ENCODE measurements at regions of chr1 and their contacts with region 1.

Region 1: GRCh38 chr1:246450611-246451251 is 56.3 kb downstream of the SMYD3 start:
- DNase-seq: peak; percentile 5
- ATAC-seq: no peak; the same call in 1 of the 3 replicates
- H3K4me3 ChIP-seq: no peak overlapping the region
- H3K27ac ChIP-seq: no peak overlapping the region
- H3K4me1 ChIP-seq: no peaks in the 10 kb centered on the region
- H3K27me3 ChIP-seq: no peaks in the 10 kb centered on the region
- CTCF ChIP-seq: peak; percentile 65
- EP300 ChIP-seq: no peak
- POLR2A ChIP-seq: no peak
- RAD21 ChIP-seq: no peak; the same call in 1 of the 2 replicates

Region 2: DNA sequence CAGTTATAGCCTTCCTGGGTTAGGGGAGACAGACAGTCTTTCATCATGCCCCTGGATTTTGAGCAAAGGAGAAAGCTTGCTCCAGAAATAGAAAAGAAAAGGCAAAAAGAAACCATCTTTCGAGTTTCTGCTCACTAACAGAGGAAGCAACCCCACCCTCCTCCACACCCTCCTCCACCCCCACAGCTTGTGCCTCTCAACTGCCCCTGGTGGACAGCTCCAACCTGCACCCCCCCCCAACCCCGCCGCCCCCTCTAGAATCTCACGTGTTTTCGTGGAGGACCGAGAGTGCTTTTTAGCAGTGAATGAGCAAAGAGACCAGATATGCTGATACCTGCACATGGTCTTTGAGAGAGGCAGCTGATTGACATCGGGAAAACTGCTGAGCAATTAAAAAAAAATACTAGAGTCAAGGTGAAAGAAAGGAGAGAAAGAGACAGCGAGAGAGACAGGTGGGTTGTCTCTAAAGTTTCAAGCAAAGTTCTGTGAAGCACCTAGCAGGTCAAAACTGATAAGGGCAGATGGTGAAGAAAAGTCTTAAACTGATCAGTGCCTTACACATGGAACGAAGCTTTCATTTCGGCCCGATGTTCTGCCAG is 937.7 kb before region 1 on chr1:
- CTCF ChIA-PET with region 1: no interaction called
- POLR2A ChIA-PET with region 1: no interaction called
- in situ Hi-C with region 1: no loop called
- intact Hi-C with region 1: loop called (anchors 10 kb)
- DNase-seq: no peak
- ATAC-seq: peak; percentile 71
- H3K4me3 ChIP-seq: no peak overlapping the region
- H3K27ac ChIP-seq: no peak overlapping the region
- H3K4me1 ChIP-seq: no peaks in the 10 kb centered on the region
- H3K27me3 ChIP-seq: peaks cover 0 to 9% of the 10 kb centered on the region in 2 experiments; a peak in 2 of 5 replicates
- CTCF ChIP-seq: no peak
- EP300 ChIP-seq: no peak
- POLR2A ChIP-seq: no peak
- RAD21 ChIP-seq: no peak

Region 3: DNA sequence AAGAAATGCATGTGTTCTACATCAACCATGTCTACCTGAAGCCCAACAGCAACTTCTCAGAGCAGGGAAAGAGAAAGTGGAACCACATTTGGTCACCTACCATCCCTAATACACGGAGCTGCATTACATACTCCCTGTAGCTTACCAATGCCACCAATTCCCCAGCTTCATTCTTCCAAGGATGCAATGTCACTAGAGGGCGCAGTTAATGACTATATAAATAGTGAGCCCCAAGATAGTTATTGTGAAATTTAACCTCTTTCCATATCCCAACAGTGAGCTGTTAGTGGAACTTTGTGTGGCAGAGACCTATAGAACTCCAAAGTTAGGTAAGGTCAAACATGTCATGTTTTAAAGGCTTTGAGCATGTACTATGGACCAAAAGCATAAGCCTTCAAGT is 561.9 kb before region 1 on chr1:
- CTCF ChIA-PET with region 1: interaction called, 4 read pairs
- POLR2A ChIA-PET with region 1: no interaction called
- in situ Hi-C with region 1: no loop called
- intact Hi-C with region 1: loop called (anchors 5 kb)
- DNase-seq: peak; percentile 52
- ATAC-seq: peak; percentile 84
- H3K4me3 ChIP-seq: no peak overlapping the region
- H3K27ac ChIP-seq: no peak overlapping the region
- H3K4me1 ChIP-seq: no peaks in the 10 kb centered on the region
- H3K27me3 ChIP-seq: no peaks in the 10 kb centered on the region
- CTCF ChIP-seq: peak; percentile 53
- EP300 ChIP-seq: no peak
- POLR2A ChIP-seq: no peak
- RAD21 ChIP-seq: 0 out of 2 replicates have a peak, but pooled peaks have one; percentile 21